Transverse colon (tissue), 4 donors: ENCODE measurements at regions of chr20 and their contacts with region 1.

Region 1: DNA sequence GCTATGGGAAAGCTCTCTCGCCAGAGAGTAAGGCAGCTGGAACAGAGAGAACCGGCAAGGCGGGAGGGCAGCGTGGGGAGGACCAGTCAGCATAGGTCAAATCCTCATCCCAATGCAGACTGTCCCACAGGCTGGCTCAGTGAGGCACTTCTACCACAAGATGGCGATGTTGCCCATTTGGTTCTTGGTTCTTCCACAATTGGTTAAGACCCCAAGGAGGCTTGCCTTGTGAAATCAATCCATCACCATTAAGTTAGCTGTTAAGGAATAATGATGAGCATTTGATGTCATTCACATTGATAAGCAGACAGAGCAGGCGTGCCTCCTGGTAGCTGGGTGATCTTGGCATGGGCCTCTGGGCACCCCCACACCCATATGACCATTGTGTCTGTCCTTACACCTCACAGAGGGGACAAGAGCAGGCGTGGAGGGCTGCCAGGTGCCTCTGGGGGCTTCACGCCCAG is 2.4 kb downstream of the CSTL1 start:
- DNase-seq: peak; percentile 59
- H3K4me3 ChIP-seq: no peak overlapping the region
- H3K27ac ChIP-seq: no peak overlapping the region
- H3K4me1 ChIP-seq: no peaks in the 10 kb centered on the region
- H3K27me3 ChIP-seq: no peaks in the 10 kb centered on the region
- CTCF ChIP-seq: peak; percentile 69 to 88 (median 79)
- EP300 ChIP-seq: no peak
- POLR2A ChIP-seq: no peak

Region 2: DNA sequence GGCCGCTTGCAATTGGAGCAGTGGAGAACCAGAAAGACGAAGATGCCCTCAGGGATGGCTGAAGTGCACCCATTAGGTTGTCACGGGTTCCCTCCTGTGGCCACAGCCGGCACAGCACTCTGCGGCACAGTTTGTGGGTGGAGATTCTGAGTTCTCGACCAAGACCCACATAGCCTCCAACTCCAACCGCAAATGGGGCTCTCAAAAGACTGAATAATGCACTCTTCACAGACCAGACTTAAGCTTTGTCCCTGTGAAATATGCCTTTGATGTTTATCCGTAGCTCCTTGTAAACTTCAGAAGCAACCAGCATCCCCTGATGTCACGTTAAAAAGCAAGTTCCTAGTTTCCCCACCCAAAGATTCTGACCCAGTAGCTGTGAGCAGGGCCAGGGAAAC is 164.8 kb after region 1 on chr20:
- in situ Hi-C with region 1: loop called in 3 of 4 experiments (anchors 10 to 25 kb)
- intact Hi-C with region 1: loop called (anchors 5 kb)
- DNase-seq: peak; percentile 78
- H3K4me3 ChIP-seq: no peak overlapping the region
- H3K27ac ChIP-seq: no peak overlapping the region
- H3K4me1 ChIP-seq: no peaks in the 10 kb centered on the region
- H3K27me3 ChIP-seq: no peaks in the 10 kb centered on the region
- CTCF ChIP-seq: peak; percentile 83 to 89 (median 84)
- EP300 ChIP-seq: no peak
- POLR2A ChIP-seq: no peak

Region 3: DNA sequence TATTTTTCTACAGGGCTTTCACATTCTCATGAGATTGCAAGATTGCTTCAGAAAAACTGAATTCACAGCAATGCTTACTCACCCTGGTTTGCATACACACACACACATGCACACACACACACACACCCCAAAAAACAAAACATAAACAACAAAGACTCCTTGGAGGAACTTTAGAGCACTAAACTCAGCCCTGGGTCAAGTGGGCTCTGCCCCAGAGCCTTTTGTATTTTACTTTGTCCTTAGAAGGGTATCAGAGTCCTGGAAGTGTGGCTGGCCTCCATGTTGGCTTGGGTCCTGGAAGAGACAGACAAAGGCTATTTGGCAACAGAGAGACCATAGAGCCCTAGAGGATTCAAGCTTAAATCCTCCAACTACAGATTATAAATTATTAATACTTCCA is 171.8 kb after region 1 on chr20:
- in situ Hi-C with region 1: loop called in 3 of 4 experiments (anchors 10 to 25 kb)
- intact Hi-C with region 1: loop called (anchors 5 kb)
- DNase-seq: no peak
- H3K4me3 ChIP-seq: no peak overlapping the region
- H3K27ac ChIP-seq: peak overlapping the region; percentile 36 to 53 (median 48)
- H3K4me1 ChIP-seq: peaks cover 0 to 12% (median 3%) of the 10 kb centered on the region in 4 donors
- H3K27me3 ChIP-seq: no peaks in the 10 kb centered on the region
- CTCF ChIP-seq: no peak
- EP300 ChIP-seq: no peak
- POLR2A ChIP-seq: no peak

Region 4: GRCh38 chr20:25382704-25383565 is 1941.1 kb after region 1 on chr20:
- in situ Hi-C with region 1: no loop called
- intact Hi-C with region 1: loop called (anchors 5 kb)
- DNase-seq: no peak
- H3K4me3 ChIP-seq: no peak overlapping the region
- H3K27ac ChIP-seq: no peak overlapping the region
- H3K4me1 ChIP-seq: peaks cover 0 to 5% (median 0%) of the 10 kb centered on the region in 4 donors
- H3K27me3 ChIP-seq: no peaks in the 10 kb centered on the region
- CTCF ChIP-seq: no peak
- EP300 ChIP-seq: no peak
- POLR2A ChIP-seq: no peak